Activated CD4-positive, alpha-beta T cell treated with anti-CD3 and anti-CD28 coated beads, Interleukin-2, amount 10 ng/mL, durations not matched to agents 24 days and 14 days (primary cell): ENCODE measurements at regions of chr12 and their contacts with region 1.

Region 1: DNA sequence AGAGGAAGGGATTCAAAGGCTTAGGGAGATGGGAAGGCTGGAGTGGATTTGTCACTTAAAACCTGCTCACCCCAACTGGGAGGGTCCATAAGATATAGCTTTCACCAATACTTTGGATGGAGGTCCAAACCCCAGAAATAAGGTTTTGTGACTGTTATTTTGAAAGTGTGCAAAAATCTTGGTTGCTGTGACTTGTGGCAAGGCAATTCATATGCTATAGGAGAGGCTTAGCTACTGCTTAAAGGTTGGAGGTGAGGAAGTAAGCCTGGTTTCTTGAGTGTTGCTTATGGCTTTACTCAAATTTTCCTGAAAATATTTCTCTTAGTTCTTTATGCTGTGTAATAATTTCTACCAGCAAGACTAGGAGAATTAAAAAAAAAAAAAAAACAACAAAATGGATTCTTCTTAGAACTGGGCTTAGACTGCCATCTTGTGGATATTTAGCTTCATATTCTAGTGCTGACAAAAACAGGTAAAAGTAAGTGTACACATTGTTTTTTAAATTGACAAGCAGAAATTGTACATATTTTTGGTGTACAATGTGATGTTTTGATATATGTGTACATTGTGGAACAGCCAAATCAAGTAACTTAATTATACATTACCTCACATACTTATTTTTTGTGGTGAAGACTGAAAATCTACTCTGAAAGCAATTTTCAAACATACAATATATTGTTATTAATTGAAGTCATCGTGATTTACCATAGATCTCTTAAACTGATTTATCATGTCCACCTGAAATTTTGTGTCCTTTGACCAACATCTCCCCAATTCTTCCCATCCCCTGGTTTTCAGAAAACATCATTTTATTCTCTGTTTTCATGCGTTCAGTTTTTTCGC is 23.0 kb downstream of the PDE6H start:
- DNase-seq: peak; percentile 64
- H3K4me3 Mint-ChIP-seq: no peak overlapping the region
- H3K27ac Mint-ChIP-seq: no peak overlapping the region
- H3K4me1 Mint-ChIP-seq: peaks cover 20% of the 10 kb centered on the region
- H3K27me3 Mint-ChIP-seq: peaks cover 24% of the 10 kb centered on the region

Region 2: GRCh38 chr12:14941369-14941768 is 54.4 kb before region 1 on chr12:
- intact Hi-C with region 1: loop called (anchors 2 kb)
- DNase-seq: peak; percentile 45
- H3K4me3 Mint-ChIP-seq: no peak overlapping the region
- H3K27ac Mint-ChIP-seq: no peak overlapping the region
- H3K4me1 Mint-ChIP-seq: peaks cover 27% of the 10 kb centered on the region
- H3K27me3 Mint-ChIP-seq: no peaks in the 10 kb centered on the region